ENCODE measurements at regions of chrX and their contacts with region 1.

Region 1: GRCh38 chrX:115233497-115234455 is at the start of gene LRCH2:
- DNase-seq: peak in 1 of 2 donors; percentile 70
- H3K4me3 ChIP-seq: peak within 1 kb of the TSS; percentile 55 to 79
- H3K27ac ChIP-seq: peak within 1 kb of the TSS; percentile 67 to 84
- H3K4me1 ChIP-seq: no peaks in the 10 kb centered on the region
- H3K27me3 ChIP-seq: no peaks in the 10 kb centered on the region
- CTCF ChIP-seq: no peak
- total RNA-seq, gene LRCH2: 5.2 TPM

Region 2: GRCh38 chrX:115324194-115324593 is 90.4 kb after region 1 on chrX:
- intact Hi-C with region 1: loop called (anchors 10 kb)
- DNase-seq: no peak
- H3K4me3 ChIP-seq: no peak overlapping the region
- H3K27ac ChIP-seq: peak overlapping the region in 1 of 2 donors; percentile 32
- H3K4me1 ChIP-seq: peaks cover 0 to 4% of the 10 kb centered on the region in 2 donors
- H3K27me3 ChIP-seq: no peaks in the 10 kb centered on the region
- CTCF ChIP-seq: no peak

Region 3: DNA sequence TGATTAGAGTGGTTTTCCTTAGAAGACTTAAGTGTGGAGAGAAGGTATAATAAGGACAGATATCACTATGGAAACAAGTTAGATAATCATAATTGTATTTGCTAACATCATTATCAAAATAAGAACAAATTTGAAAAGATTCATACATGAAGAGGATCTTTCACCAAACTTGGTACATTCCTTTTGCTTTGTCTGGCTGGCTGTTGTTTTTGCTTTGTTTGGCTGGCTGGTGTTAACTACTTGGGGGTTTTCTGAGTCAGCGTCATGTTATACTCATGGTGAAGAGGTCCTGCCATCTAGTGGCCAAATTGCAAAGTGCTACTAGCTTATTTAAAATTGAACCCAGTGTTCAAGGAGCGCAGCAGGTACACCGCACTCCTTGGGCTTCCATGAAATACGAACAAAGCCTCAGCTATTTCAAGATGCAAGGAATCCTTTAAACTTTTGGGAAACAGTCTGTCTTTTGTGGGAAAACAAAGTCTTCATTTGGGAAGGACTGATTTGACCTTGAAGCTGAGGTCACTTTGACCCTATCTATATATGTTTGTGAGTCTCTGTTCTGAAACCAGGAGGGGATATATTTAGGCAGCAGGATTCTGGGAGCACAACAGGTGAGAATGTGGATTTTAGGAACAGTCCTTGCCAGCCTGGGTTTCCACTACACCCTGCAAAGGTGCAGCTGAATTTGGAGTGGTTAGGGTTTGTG is 456.9 kb after region 1 on chrX:
- intact Hi-C with region 1: loop called (anchors 5 kb)
- DNase-seq: peak in 1 of 2 donors; percentile 86
- H3K4me3 ChIP-seq: peak overlapping the region in 1 of 2 donors; percentile 41
- H3K27ac ChIP-seq: peak overlapping the region; percentile 59 to 78
- H3K4me1 ChIP-seq: no peaks in the 10 kb centered on the region
- H3K27me3 ChIP-seq: no peaks in the 10 kb centered on the region
- CTCF ChIP-seq: peak; percentile 58 to 86 (median 78)

Measured in ascending aorta (tissue), 2 donors.